Sciatic nerve (tissue), 2 donors: ENCODE measurements at regions of chr2 and their contacts with region 1.

Region 1: DNA sequence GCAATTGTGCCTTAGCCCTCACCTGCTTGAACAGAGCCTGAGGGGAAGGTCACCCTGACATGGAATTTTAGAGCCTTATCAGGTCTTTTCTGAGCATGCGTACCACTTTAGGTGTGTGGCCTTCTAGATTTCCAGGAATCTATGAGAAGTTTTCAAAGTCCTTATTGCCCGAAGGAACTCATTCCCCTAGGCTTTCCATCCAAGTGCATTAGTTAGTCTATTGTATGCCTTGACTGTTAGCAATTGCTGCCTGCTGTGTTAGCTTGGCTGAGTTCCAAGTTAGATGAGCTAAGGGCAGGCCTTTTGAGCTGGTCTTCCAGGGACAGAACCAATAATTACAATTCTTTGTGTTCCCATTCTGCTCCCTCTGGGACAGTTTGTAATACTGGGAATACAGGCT is 30.8 kb upstream of the PUM2 start:
- DNase-seq: no peak
- ATAC-seq: peak; percentile 70

Region 2: GRCh38 chr2:19979932-19980331 is 401.5 kb before region 1 on chr2:
- intact Hi-C with region 1: no loop called
- DNase-seq: no peak
- ATAC-seq: no peak

Region 3: GRCh38 chr2:20617892-20618467 is 236.5 kb after region 1 on chr2:
- intact Hi-C with region 1: no loop called
- DNase-seq: peak; percentile 99
- ATAC-seq: peak; percentile 92

Region 4: DNA sequence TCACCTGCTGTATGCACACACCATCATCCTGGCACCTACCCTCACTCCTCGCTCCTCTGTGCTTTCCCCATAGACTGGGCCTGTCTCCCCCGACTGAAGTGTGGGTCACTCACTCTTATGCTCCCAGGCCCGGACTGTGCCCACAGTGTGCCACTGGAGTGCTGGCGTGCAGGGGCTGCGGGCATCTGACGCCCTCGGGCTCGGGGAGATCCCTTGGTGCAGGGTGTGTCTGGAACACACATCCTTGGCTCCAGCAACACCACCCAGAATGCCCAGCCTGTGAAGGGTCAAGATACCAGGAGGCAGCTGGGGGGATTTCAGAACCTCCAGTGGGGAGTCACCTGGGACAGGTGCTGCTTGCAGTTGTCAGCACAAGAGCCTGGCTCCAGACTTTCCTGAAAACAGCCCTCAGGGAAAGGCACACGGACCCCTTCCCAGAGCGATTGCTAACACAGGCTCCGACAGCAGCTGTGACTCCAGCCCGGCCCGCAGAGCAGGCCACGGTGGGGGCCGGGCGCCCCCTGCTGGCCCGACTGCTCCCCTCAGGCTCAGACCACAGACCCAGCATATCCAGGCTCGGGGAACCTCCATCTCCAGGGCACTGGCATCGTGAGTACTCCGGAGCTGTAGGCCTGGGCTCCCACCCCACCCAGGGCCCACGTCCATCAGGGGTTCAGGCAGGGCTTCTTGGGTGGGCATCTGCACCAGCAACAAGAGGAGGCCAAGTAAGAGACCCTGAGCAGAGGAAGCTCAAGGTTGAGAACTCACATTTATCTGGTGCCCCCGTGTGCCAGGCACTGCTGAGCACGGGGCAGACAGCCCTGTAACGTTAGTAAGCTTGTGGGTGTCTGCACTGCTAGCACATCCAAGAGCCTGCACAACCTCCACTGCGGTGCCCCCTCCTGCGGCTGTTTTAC is 260.9 kb after region 1 on chr2:
- intact Hi-C with region 1: loop called (anchors 10 kb)
- DNase-seq: peak; percentile 86
- ATAC-seq: peak; percentile 89